ENCODE measurements at regions of chr13 and their contacts with region 1.

Region 1: GRCh38 chr13:49278211-49278610 is 30.5 kb downstream of the CDADC1 start:
- DNase-seq: no peak
- H3K4me3 ChIP-seq: no peak overlapping the region
- H3K27ac ChIP-seq: no peak overlapping the region
- H3K4me1 ChIP-seq: no peaks in the 10 kb centered on the region
- H3K27me3 ChIP-seq: no peaks in the 10 kb centered on the region
- CTCF ChIP-seq: no peak
- EP300 ChIP-seq: no peak
- RAD21 ChIP-seq: no peak

Region 2: DNA sequence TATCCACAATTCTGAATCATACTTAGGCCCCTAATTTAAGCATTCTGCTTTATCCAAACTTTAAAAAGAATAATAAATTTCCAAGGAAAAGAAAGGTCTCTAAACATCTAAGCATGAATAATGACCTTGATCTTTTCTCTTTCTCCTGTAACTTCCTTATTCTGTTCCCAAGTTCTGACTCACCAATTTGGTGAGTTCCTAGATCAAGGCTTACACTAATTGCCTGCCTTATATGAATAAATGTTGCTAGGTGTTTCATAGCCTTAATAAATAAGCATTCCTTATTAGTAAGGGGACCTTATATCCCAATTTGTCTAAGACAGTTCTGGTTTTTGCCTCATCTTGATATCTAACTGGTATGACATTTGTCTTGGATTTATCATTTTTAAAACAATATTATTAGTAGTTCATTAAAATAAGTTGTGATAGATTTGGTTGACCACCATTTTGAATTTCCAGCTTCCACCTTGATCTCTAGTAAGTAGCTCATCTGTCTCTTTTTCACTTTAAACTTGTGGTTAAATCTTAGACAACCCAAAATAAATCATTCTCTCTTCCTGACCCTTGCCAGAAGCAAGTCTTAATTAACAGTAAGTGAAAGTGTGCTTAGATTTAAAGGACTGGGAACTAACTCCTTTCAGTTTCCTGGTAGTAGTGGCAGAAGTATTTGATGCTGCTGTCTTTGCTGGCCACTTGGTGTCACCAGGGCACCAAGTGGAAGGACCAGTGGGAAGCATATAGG is 179.3 kb before region 1 on chr13:
- CTCF ChIA-PET with region 1: interaction called, 27 read pairs
- POLR2A ChIA-PET with region 1: no interaction called
- DNase-seq: peak; percentile 9
- H3K4me3 ChIP-seq: no peak overlapping the region
- H3K27ac ChIP-seq: peak overlapping the region; percentile 22 to 91; a peak in 3 of 4 replicates
- H3K4me1 ChIP-seq: peaks cover 12% of the 10 kb centered on the region in 2 experiments; a peak in 3 of 4 replicates
- H3K27me3 ChIP-seq: no peaks in the 10 kb centered on the region
- CTCF ChIP-seq: peak; percentile 47
- EP300 ChIP-seq: no peak
- RAD21 ChIP-seq: peak; percentile 66

Region 3: DNA sequence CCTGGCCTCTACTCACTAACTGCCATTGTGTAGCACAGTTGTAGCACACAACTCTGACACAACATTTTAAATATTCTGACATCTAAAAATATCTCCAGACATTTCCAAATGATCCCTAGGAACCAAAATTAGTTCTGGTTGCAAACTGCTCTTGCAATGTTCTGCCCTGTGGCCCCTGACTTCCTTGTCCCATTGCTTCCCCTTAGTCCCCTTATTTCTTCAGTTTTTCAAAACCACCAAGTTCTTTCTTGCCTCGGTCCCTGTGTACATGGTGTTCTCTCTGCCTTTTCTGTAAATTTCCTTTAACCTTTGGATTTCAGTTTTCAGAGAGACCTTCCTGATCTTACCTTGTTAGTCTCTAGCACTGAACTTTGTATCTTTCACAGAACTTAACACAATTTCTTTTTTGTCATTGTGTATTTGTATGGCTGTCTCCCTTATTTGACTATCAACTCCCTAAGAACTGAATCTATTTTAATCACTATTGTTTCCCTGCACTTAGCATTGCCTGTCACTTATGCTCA is 145.7 kb before region 1 on chr13:
- CTCF ChIA-PET with region 1: no interaction called
- POLR2A ChIA-PET with region 1: no interaction called
- DNase-seq: no peak
- H3K4me3 ChIP-seq: no peak overlapping the region
- H3K27ac ChIP-seq: no peak overlapping the region
- H3K4me1 ChIP-seq: no peaks in the 10 kb centered on the region
- H3K27me3 ChIP-seq: no peaks in the 10 kb centered on the region
- CTCF ChIP-seq: no peak
- EP300 ChIP-seq: no peak
- RAD21 ChIP-seq: no peak

Region 4: GRCh38 chr13:49240017-49240416 is 38.2 kb before region 1 on chr13:
- CTCF ChIA-PET with region 1: interaction called, 13 read pairs
- POLR2A ChIA-PET with region 1: no interaction called
- DNase-seq: no peak
- H3K4me3 ChIP-seq: no peak overlapping the region
- H3K27ac ChIP-seq: no peak overlapping the region
- H3K4me1 ChIP-seq: no peaks in the 10 kb centered on the region
- H3K27me3 ChIP-seq: no peaks in the 10 kb centered on the region
- CTCF ChIP-seq: peak; percentile 62
- EP300 ChIP-seq: no peak
- RAD21 ChIP-seq: peak; percentile 59

Region 5: GRCh38 chr13:49247643-49248621 is 30.3 kb before region 1 on chr13 and contains the start of gene CDADC1:
- CTCF ChIA-PET with region 1: interaction called, 18 read pairs
- POLR2A ChIA-PET with region 1: no interaction called
- DNase-seq: peak; percentile 88
- H3K4me3 ChIP-seq: peak within 1 kb of the TSS; percentile 71 to 75
- H3K27ac ChIP-seq: peak within 1 kb of the TSS; percentile 67 to 71
- H3K4me1 ChIP-seq: peaks cover 0 to 4% of the 10 kb centered on the region in 2 experiments; a peak in 2 of 4 replicates
- H3K27me3 ChIP-seq: no peaks in the 10 kb centered on the region
- CTCF ChIP-seq: no peak
- EP300 ChIP-seq: no peak
- RAD21 ChIP-seq: no peak
- polyA plus RNA-seq, gene CDADC1: 3.2 and 3.5 TPM in 2 replicates

Region 6: GRCh38 chr13:49258089-49258796 is 20.0 kb before region 1 on chr13:
- CTCF ChIA-PET with region 1: interaction called, 13 read pairs
- POLR2A ChIA-PET with region 1: no interaction called
- DNase-seq: no peak
- H3K4me3 ChIP-seq: no peak overlapping the region
- H3K27ac ChIP-seq: no peak overlapping the region
- H3K4me1 ChIP-seq: no peaks in the 10 kb centered on the region
- H3K27me3 ChIP-seq: no peaks in the 10 kb centered on the region
- CTCF ChIP-seq: no peak
- EP300 ChIP-seq: no peak
- RAD21 ChIP-seq: no peak

Region 7: GRCh38 chr13:49265822-49266221 is 12.4 kb before region 1 on chr13:
- CTCF ChIA-PET with region 1: interaction called, 13 read pairs
- POLR2A ChIA-PET with region 1: no interaction called
- DNase-seq: no peak
- H3K4me3 ChIP-seq: no peak overlapping the region
- H3K27ac ChIP-seq: no peak overlapping the region
- H3K4me1 ChIP-seq: no peaks in the 10 kb centered on the region
- H3K27me3 ChIP-seq: no peaks in the 10 kb centered on the region
- CTCF ChIP-seq: no peak
- EP300 ChIP-seq: no peak
- RAD21 ChIP-seq: no peak

Region 8: GRCh38 chr13:49292742-49293486 is 14.7 kb after region 1 on chr13:
- CTCF ChIA-PET with region 1: interaction called, 26 read pairs
- POLR2A ChIA-PET with region 1: no interaction called
- DNase-seq: peak; percentile 49
- H3K4me3 ChIP-seq: no peak overlapping the region
- H3K27ac ChIP-seq: no peak overlapping the region
- H3K4me1 ChIP-seq: peaks cover 0 to 3% of the 10 kb centered on the region in 2 experiments; a peak in 1 of 4 replicates
- H3K27me3 ChIP-seq: no peaks in the 10 kb centered on the region
- CTCF ChIP-seq: no peak
- EP300 ChIP-seq: no peak
- RAD21 ChIP-seq: no peak

Measured in SK-N-SH (cell line).